ENCODE measurements at regions of chr18 and their contacts with region 1.

Region 1: GRCh38 chr18:6920099-6920899 is 190.8 kb downstream of the ARHGAP28 start:
- DNase-seq: peak in 3 of 4 donors; percentile 69 to 78 (median 72)
- ATAC-seq: peak; percentile 89
- H3K4me3 ChIP-seq: no peak overlapping the region
- H3K27ac ChIP-seq: no peak overlapping the region
- H3K4me1 ChIP-seq: no peaks in the 10 kb centered on the region
- H3K27me3 ChIP-seq: no peaks in the 10 kb centered on the region
- CTCF ChIP-seq: peak; percentile 29 to 43

Region 2: GRCh38 chr18:7000484-7001096 is 80.3 kb after region 1 on chr18:
- intact Hi-C with region 1: loop called in 1 of 2 experiments (anchors 10 kb)
- DNase-seq: peak in 1 of 4 donors; percentile 56
- ATAC-seq: peak; percentile 53
- H3K4me3 ChIP-seq: no peak overlapping the region
- H3K27ac ChIP-seq: no peak overlapping the region
- H3K4me1 ChIP-seq: no peaks in the 10 kb centered on the region
- H3K27me3 ChIP-seq: no peaks in the 10 kb centered on the region
- CTCF ChIP-seq: peak; percentile 18 to 45

Region 3: DNA sequence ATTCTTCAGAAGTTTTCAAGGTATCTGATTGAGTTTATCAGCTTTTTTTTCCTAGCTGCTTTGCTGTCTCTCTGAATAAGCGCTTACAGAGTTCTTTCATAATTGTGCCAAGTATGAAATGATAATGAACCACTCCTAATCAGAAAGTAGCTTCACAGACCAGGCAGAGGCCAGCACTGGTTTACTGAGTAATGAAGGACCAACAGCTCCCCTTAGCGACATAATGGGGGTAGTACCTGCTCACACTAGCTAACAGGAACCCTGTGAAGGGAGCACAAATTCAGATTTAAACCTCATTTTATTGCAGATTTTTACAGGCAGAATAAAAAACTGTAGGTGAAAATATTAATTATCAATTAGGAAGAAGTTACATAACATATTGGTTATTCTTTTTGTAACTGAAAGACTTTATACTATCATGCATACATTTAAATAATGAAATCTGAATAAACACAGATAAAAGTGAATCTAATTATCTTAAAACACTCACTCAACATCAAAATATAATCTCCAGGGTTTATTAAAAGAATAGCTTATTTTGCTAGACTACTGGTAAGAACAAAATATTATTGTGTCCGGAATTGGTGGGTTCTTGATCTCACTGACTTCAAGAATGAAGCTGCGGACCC is 256.9 kb after region 1 on chr18:
- intact Hi-C with region 1: loop called in 1 of 2 experiments (anchors 10 kb)
- DNase-seq: peak in 2 of 4 donors; percentile 41 to 78
- ATAC-seq: peak; percentile 99
- H3K4me3 ChIP-seq: no peak overlapping the region
- H3K27ac ChIP-seq: no peak overlapping the region
- H3K4me1 ChIP-seq: peaks cover 0 to 5% of the 10 kb centered on the region in 2 donors
- H3K27me3 ChIP-seq: no peaks in the 10 kb centered on the region
- CTCF ChIP-seq: peak; percentile 59 to 65

Region 4: DNA sequence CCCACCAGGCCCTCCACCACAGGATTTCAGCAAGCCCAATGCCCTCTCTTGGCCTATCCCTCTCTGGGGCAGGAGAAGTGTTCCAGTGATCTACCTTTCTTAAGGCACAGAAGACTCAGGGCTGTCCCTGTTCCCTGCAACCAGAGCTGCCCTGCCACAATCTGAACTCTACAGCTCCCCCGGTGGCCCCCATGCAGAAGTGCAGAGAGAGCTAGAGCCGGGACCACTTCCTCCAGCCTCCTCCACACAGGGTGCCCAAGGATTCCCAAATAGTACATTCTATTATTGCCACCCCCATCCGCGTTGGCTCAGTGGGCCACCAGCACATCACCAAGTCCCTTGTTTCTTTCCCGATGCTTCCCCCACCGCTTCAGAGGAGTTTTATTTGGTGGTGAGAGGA is 532.0 kb after region 1 on chr18:
- intact Hi-C with region 1: no loop called
- DNase-seq: peak in 1 of 4 donors; percentile 16
- ATAC-seq: peak; percentile 95
- H3K4me3 ChIP-seq: no peak overlapping the region
- H3K27ac ChIP-seq: no peak overlapping the region
- H3K4me1 ChIP-seq: no peaks in the 10 kb centered on the region
- H3K27me3 ChIP-seq: no peaks in the 10 kb centered on the region
- CTCF ChIP-seq: peak; percentile 54 to 63

Region 5: GRCh38 chr18:7482342-7482741 is 562.0 kb after region 1 on chr18:
- intact Hi-C with region 1: no loop called
- DNase-seq: no peak
- ATAC-seq: no peak
- H3K4me3 ChIP-seq: no peak overlapping the region
- H3K27ac ChIP-seq: no peak overlapping the region
- H3K4me1 ChIP-seq: no peaks in the 10 kb centered on the region
- H3K27me3 ChIP-seq: no peaks in the 10 kb centered on the region
- CTCF ChIP-seq: no peak

Measured in left lung (tissue), 14 donors.